CD8-positive, alpha-beta T cell (primary cell): ENCODE measurements at regions of chr16 and their contacts with region 1.

Region 1: GRCh38 chr16:31179747-31180459 is at the start of gene FUS:
- DNase-seq: peak; percentile 86 to 97 (median 90)
- ATAC-seq: peak; percentile 73
- H3K4me3 ChIP-seq: peak within 1 kb of the TSS; percentile 80 to 90
- H3K4me3 Mint-ChIP-seq: peak within 1 kb of the TSS; percentile 98
- H3K27ac ChIP-seq: peak within 1 kb of the TSS; percentile 88 to 95
- H3K27ac Mint-ChIP-seq: peak within 1 kb of the TSS; percentile 99
- H3K4me1 ChIP-seq: peaks cover 63% of the 10 kb centered on the region
- H3K4me1 Mint-ChIP-seq: peaks cover 60% of the 10 kb centered on the region
- H3K27me3 ChIP-seq: no peaks in the 10 kb centered on the region
- H3K27me3 Mint-ChIP-seq: no peaks in the 10 kb centered on the region
- CTCF ChIP-seq: no peak
- total RNA-seq, gene FUS: 734 to 742 TPM

Region 2: DNA sequence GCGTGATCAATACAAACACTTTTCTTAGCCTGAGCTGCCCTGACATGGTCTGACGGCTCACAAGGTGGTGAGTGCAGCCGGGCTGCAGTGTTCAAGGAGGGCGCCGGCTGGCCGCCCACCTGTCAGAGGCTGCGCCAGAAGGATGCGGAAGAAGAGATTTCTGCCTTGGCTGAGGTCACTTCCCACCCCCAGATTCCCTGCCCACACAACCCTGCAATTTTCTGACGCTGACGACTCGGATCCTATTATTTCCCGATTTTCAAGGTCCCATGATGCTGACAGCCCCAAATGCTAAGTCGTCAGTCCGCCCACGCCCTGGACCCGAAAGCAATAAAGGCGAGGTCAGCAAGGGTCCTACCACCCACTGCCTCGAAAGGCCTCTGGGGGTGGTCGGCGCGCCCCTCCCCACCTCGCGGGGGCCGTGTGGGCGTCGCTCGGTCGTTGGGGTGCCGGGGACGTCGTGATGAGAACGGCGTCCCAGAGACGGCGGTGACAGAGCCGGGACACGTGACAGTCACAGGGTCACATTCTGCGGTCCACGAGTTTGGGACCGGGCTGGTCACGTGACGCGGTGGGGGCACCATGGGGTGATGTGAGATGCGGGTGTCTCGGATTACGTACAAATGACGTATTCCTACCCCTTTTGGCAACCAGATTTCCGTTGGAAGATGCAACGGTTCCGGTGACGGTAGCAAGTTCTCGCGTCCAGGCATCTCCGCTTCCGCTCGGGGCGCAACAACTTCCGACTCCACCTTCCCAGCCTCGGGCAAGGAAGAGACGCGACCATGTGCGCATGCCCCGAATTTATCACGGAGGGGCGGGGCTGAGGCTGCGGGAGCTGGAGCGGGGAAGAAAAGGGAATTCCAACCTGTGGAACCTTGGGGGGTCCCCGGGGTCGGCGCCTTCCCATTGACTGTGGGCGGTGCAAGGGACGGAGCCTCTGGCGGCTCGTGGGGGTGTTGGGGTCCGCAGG is 146.9 kb before region 1 on chr16 and contains the start of gene STX4:
- CTCF ChIA-PET with region 1: no interaction called
- POLR2A ChIA-PET with region 1: interaction called, 5 read pairs
- intact Hi-C with region 1: loop called (anchors 1 kb)
- DNase-seq: peak; percentile 93 to 100 (median 97)
- ATAC-seq: peak; percentile 73
- H3K4me3 ChIP-seq: peak within 1 kb of the TSS; percentile 84 to 88
- H3K4me3 Mint-ChIP-seq: peak within 1 kb of the TSS; percentile 98
- H3K27ac ChIP-seq: peak within 1 kb of the TSS; percentile 98 to 99
- H3K27ac Mint-ChIP-seq: peak within 1 kb of the TSS; percentile 99
- H3K4me1 ChIP-seq: peaks cover 18% of the 10 kb centered on the region
- H3K4me1 Mint-ChIP-seq: peaks cover 28% of the 10 kb centered on the region
- H3K27me3 ChIP-seq: no peaks in the 10 kb centered on the region
- H3K27me3 Mint-ChIP-seq: no peaks in the 10 kb centered on the region
- CTCF ChIP-seq: no peak
- total RNA-seq, gene STX4: 63.8 to 69.9 TPM

Region 3: DNA sequence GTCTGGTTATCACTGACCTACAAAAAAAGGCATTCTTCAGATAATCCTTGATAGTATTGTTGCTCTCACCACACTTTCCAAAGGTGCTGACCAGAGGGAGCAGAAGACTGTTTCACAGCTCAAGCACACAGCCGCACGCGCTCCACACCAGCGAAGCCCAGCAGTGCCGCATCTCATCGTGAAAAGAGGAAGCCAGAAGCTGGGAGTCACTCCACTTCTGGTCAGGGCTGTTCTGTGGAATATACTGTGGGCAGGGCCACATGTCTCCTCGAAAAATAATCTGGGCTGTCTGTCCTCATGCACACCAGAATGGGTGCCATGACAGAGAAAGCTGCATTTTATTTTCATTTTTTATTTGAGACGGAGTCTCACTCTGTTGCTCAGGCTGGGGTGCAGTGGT is 22.8 kb before region 1 on chr16:
- CTCF ChIA-PET with region 1: interaction called, 26 read pairs
- POLR2A ChIA-PET with region 1: interaction called, 22 read pairs
- intact Hi-C with region 1: loop called (anchors 1 to 2 kb)
- DNase-seq: no peak
- ATAC-seq: no peak
- H3K4me3 ChIP-seq: no peak overlapping the region
- H3K4me3 Mint-ChIP-seq: no peak overlapping the region
- H3K27ac ChIP-seq: no peak overlapping the region
- H3K27ac Mint-ChIP-seq: no peak overlapping the region
- H3K4me1 ChIP-seq: no peaks in the 10 kb centered on the region
- H3K4me1 Mint-ChIP-seq: peaks cover 12% of the 10 kb centered on the region
- H3K27me3 ChIP-seq: no peaks in the 10 kb centered on the region
- H3K27me3 Mint-ChIP-seq: peaks cover under 1% of the 10 kb centered on the region
- CTCF ChIP-seq: no peak

Region 4: DNA sequence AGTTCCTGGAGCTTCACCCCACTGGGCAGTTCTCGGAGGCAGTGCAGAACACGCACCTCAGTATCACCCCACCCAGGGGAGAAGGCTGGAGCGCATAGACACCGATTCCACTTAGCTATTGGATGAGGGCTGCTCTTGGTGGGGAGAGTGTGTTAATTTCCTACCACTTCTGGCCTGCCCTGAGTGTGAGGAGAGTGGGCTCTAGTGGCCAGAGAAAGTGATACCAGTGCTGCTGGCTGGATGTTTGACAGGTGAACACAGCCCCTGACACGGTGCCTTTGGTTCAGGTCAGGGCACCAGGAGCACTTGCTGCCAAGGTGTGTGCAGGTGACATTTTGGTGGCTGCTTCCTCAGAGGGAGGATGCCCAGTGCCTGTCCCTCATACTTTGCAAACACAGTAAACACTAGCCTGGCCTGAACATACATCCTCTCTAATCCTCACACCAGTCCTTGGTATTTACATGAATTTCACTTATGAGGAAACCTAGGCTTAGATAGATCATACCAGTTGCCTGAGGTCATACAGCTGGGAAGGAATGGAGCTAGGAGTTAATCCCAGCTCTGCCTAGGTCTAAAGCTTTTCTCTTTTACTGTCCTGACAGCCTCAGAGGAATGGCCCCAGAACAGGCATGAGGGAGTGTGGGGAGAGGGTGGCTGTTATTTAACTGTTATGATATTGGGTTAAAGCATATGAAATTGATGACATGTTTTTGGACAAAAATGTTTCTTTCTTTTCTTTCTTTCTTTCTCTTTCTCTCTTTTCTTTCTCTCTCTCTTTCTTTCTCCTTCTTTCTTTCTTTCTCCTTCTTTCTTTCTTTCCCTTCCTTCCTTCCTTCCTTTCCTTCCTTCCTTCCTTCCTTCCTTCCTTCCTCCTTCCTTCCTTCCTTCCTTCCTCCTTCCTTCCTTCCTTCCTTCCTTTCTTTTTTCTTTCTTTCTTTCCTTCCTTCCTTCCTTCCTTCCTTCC is 154.1 kb after region 1 on chr16:
- CTCF ChIA-PET with region 1: no interaction called
- POLR2A ChIA-PET with region 1: interaction called, 7 read pairs
- intact Hi-C with region 1: loop called in 1 of 2 experiments (anchors 10 kb)
- DNase-seq: peak in 6 of 9 experiments; percentile 27 to 66 (median 39)
- ATAC-seq: peak; percentile 70
- H3K4me3 ChIP-seq: no peak overlapping the region
- H3K4me3 Mint-ChIP-seq: no peak overlapping the region
- H3K27ac ChIP-seq: no peak overlapping the region
- H3K27ac Mint-ChIP-seq: peak overlapping the region; percentile 49
- H3K4me1 ChIP-seq: peaks cover 37% of the 10 kb centered on the region
- H3K4me1 Mint-ChIP-seq: peaks cover 43% of the 10 kb centered on the region
- H3K27me3 ChIP-seq: no peaks in the 10 kb centered on the region
- H3K27me3 Mint-ChIP-seq: no peaks in the 10 kb centered on the region
- CTCF ChIP-seq: peak; percentile 12

Region 5: GRCh38 chr16:31440516-31441184 is 260.7 kb after region 1 on chr16:
- CTCF ChIA-PET with region 1: interaction called, 3 read pairs
- POLR2A ChIA-PET with region 1: interaction called, 8 read pairs
- intact Hi-C with region 1: loop called in 1 of 2 experiments (anchors 5 kb)
- DNase-seq: no peak
- ATAC-seq: no peak
- H3K4me3 ChIP-seq: no peak overlapping the region
- H3K4me3 Mint-ChIP-seq: no peak overlapping the region
- H3K27ac ChIP-seq: no peak overlapping the region
- H3K27ac Mint-ChIP-seq: no peak overlapping the region
- H3K4me1 ChIP-seq: peaks cover 4% of the 10 kb centered on the region
- H3K4me1 Mint-ChIP-seq: peaks cover 6% of the 10 kb centered on the region
- H3K27me3 ChIP-seq: no peaks in the 10 kb centered on the region
- H3K27me3 Mint-ChIP-seq: no peaks in the 10 kb centered on the region
- CTCF ChIP-seq: no peak

Region 6: GRCh38 chr16:31700526-31701388 is 520.9 kb after region 1 on chr16:
- CTCF ChIA-PET with region 1: no interaction called
- POLR2A ChIA-PET with region 1: interaction called, 4 read pairs
- intact Hi-C with region 1: loop called in 1 of 2 experiments (anchors 10 kb)
- DNase-seq: peak; percentile 79 to 94 (median 90)
- ATAC-seq: peak; percentile 86
- H3K4me3 ChIP-seq: peak overlapping the region; percentile 76 to 94
- H3K4me3 Mint-ChIP-seq: peak overlapping the region; percentile 95
- H3K27ac ChIP-seq: peak overlapping the region; percentile 90 to 91
- H3K27ac Mint-ChIP-seq: peak overlapping the region; percentile 97
- H3K4me1 ChIP-seq: peaks cover 28% of the 10 kb centered on the region
- H3K4me1 Mint-ChIP-seq: peaks cover 31% of the 10 kb centered on the region
- H3K27me3 ChIP-seq: no peaks in the 10 kb centered on the region
- H3K27me3 Mint-ChIP-seq: no peaks in the 10 kb centered on the region
- CTCF ChIP-seq: no peak